Prostate gland (tissue), 2 donors: ENCODE measurements at regions of chr20 and their contacts with region 1.

Region 1: DNA sequence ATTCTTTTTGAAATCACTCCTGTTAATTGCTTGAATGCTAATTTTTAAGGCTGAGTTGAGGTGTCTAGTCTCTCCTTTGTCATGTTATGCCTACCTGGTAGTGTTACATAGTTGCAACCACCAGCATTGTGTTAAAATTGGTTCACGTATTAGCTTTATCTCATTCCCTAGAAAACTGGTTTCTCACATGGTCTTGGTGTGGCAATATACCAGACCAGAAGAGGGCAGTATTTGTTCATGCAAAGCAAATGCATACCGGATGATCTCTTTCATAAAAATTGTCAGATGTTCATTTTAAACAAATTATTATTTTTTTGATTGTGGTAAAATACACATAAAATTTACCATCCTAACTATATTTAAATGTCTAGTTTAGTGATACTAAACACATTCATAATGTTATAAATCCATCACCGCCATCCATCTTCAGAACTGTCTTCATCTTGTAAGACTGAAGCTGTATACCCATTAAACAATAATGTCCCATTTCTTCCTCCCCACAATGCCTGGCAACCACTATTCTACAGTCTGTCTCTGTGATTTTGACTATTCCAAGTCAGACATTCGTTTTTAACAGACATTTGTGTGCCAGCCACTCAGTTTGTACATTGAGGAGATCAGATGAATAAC is 92.8 kb downstream of the ATRN start:
- DNase-seq: no peak
- H3K4me3 ChIP-seq: no peak overlapping the region
- H3K27ac ChIP-seq: no peak overlapping the region
- H3K4me1 ChIP-seq: no peaks in the 10 kb centered on the region
- H3K27me3 ChIP-seq: no peaks in the 10 kb centered on the region
- CTCF ChIP-seq: peak in 3 of 4 experiments; percentile 42 to 63 (median 58)
- POLR2A ChIP-seq: no peak

Region 2: DNA sequence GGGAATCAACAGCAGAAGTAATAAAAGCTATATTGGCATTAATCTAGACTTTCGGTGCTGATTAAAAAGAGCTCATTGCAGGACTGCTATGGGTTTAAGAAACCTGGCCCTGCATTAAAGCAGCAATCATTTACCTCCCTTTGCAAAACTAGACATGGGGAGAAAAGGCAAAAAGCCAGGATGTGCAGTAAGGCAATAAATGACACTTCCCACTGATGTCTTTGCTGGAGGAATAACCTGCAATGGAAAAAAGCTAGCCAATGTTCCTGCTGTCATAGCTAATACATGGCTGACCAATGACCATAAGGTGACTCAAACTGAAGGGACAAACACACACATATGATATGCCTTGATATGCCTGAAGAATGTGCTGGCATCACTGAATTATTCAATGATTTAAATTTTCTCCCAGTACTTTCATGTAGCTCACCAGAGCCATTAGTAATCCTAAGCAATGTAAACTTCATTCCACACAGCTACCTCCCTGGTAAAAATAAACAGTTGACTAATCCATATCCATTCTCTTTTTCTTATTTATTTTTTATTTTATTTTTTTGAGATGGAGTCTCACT is 164.9 kb before region 1 on chr20:
- intact Hi-C with region 1: no loop called
- DNase-seq: no peak
- H3K4me3 ChIP-seq: no peak overlapping the region
- H3K27ac ChIP-seq: no peak overlapping the region
- H3K4me1 ChIP-seq: peaks cover 3% of the 10 kb centered on the region
- H3K27me3 ChIP-seq: no peaks in the 10 kb centered on the region
- CTCF ChIP-seq: no peak
- POLR2A ChIP-seq: no peak

Region 3: GRCh38 chr20:3494223-3494622 is 69.4 kb before region 1 on chr20:
- intact Hi-C with region 1: no loop called
- DNase-seq: no peak
- H3K4me3 ChIP-seq: no peak overlapping the region
- H3K27ac ChIP-seq: no peak overlapping the region
- H3K4me1 ChIP-seq: no peaks in the 10 kb centered on the region
- H3K27me3 ChIP-seq: no peaks in the 10 kb centered on the region
- CTCF ChIP-seq: no peak
- POLR2A ChIP-seq: no peak

Region 4: DNA sequence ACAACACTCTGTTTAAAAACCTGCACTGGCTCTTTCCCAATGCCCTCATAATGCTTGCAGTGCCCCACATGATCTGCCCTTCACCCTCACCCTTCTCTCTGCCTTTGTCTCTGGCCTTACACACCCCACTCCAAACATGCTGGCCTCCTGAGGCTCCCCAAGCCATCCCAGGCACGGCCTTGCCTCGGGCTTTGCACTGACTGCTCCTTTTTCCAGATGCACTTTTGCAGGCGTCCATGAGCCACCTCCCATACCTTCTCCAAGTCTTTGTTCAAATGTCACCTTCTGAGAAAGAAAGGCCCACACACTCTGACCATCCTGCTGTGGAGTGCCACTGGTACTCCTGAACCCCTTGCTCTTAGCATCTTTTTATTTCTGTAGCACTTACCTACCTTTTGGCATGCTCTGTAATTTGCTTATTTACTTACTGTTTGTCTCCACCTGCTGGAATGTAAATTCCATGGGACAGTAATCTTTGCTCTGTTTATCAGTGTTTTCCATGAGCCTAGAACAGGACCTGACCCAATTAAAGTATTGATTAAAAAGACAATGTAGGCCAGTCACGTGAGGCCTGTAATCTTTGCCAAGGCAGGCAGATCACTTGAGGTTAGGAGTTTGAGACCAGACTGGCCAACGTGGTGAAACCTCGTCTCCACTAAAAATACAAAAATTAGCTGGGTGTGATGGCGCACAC is 68.8 kb after region 1 on chr20:
- intact Hi-C with region 1: loop called (anchors 10 kb)
- DNase-seq: no peak
- H3K4me3 ChIP-seq: no peak overlapping the region
- H3K27ac ChIP-seq: no peak overlapping the region
- H3K4me1 ChIP-seq: no peaks in the 10 kb centered on the region
- H3K27me3 ChIP-seq: no peaks in the 10 kb centered on the region
- CTCF ChIP-seq: peak in 1 of 4 experiments; percentile 20
- POLR2A ChIP-seq: no peak

Region 5: DNA sequence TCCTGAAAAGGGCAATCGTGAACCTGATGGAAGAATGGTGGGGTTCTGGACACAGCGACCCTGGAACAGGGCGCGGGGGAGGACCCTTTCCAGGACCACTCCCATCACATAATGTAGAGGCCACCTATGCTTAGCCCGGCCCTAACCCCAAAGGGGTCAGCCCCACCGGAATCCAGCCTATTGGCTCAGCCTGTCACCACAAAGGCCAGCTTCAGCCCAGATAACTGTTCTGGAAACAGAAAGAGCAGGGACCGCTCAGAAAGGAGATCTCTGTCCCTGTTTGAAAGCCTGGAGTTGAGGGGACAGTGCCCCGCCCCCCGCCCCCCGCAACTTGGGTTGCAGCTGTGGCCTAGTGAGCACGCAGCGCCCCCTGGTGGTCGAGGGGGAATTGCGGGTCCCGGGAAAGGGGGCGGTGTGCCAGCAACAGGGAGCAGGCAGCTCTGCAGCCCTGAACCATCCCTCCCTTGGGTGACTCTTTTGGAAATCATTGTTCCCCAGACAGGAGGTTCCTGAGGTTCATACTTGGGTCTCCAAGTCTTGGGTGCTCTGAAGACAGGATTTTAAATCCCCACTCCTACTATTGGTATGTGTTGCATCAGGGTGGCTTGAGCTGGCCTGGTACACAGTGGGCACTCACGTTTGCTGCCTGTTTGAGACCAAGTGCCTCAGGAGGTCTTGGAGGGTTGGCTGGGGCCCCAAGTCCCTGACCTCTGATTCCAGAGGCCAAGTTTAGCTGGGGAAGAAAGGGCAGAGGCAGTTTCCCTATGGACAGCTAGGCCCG is 147.2 kb after region 1 on chr20:
- intact Hi-C with region 1: loop called (anchors 5 kb)
- DNase-seq: peak; percentile 44
- H3K4me3 ChIP-seq: no peak overlapping the region
- H3K27ac ChIP-seq: no peak overlapping the region
- H3K4me1 ChIP-seq: no peaks in the 10 kb centered on the region
- H3K27me3 ChIP-seq: no peaks in the 10 kb centered on the region
- CTCF ChIP-seq: peak; percentile 84 to 99 (median 90)
- POLR2A ChIP-seq: no peak